ENCODE measurements at regions of chr19 and their contacts with region 1.

Region 1: GRCh38 chr19:10946964-10947657 is 13.7 kb upstream of the SMARCA4 start:
- DNase-seq: no peak
- H3K4me3 Mint-ChIP-seq: no peak overlapping the region
- H3K27ac Mint-ChIP-seq: no peak overlapping the region
- H3K4me1 Mint-ChIP-seq: peaks cover 1% of the 10 kb centered on the region
- H3K27me3 Mint-ChIP-seq: no peaks in the 10 kb centered on the region

Region 2: GRCh38 chr19:10936661-10937084 is 10.4 kb before region 1 on chr19:
- CTCF ChIA-PET with region 1: interaction called, 15 read pairs
- DNase-seq: peak; percentile 49
- H3K4me3 Mint-ChIP-seq: no peak overlapping the region
- H3K27ac Mint-ChIP-seq: no peak overlapping the region
- H3K4me1 Mint-ChIP-seq: peaks cover 16% of the 10 kb centered on the region
- H3K27me3 Mint-ChIP-seq: no peaks in the 10 kb centered on the region